ENCODE measurements at regions of chr15 and their contacts with region 1.

Region 1: DNA sequence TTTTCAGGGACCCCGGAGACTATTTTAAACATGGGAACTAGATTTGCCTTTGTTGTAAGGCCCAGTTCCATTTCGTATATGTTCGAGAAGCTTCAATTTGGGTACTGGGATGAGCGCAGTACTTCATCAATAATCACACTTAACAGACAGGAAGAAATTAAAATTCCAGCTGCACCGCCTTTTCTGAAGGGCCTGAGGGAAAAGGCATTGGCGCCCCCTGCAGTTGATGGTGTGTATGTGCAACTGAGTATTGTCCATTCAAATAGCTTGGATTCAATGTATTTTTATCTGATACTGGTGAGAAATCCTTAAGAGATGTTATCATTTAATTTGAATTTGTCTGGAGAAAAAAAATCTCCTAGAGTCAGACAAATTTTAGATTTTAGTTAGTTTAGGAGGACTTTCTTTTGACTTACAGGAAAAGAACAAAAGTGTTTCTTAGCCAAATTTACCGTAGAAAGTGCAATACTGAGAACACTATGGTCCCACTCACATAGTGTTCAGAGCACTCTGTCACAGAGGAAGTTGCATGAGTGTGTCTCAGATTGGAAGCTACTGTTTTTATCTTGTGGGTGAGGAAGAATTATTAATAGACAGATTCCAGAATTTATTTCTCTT is 5.4 kb upstream of the ALDH1A2 start:
- DNase-seq: peak; percentile 7 to 74 (median 58)
- H3K4me3 ChIP-seq: no peak overlapping the region
- H3K27ac ChIP-seq: no peak overlapping the region
- H3K27me3 ChIP-seq: peaks cover 0 to 23% (median 10%) of the 10 kb centered on the region in 45 donors
- CTCF ChIP-seq: peak; percentile 82 to 98 (median 92)

Region 2: DNA sequence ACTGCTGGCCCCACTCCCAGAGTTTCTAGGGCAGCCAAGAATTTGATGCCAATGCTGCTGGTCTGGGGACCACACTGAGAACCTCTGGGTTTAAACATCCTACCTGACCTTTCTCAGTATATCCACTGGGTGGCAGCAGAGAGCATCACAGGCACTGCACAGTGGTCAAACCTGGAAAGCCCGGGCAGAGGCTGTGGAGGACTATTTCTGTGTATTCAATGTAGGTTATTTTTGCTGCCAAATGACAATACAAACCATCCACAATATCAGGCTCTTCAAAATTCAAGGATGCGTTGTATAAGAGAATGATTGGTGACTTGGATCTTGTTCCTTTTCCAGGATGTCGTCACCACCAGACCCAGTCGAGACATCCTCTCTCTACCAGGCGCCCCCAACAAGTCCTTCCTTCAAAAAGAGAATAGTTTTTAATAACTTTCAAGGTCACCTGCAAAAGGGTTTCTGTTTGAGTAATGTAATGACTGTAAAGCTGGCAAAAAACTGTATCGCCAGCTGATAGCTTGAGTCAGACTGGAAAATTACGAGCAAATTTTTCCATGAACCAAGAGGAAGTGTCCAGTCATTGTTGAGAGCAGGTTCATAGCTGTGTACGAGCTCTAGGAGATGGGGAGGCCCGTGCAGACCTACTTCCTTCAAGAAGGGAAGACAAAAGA is 509.7 kb before region 1 on chr15:
- intact Hi-C with region 1: loop called (anchors 5 to 10 kb)
- DNase-seq: peak in 9 of 10 donors; percentile 30 to 79 (median 61)
- H3K4me3 ChIP-seq: peak overlapping the region in 2 of 59 donors; percentile 6 to 12
- H3K27ac ChIP-seq: peak overlapping the region in 3 of 59 donors; percentile 25 to 32 (median 29)
- H3K27me3 ChIP-seq: no peaks in the 10 kb centered on the region
- CTCF ChIP-seq: peak; percentile 80 to 97 (median 92)

Region 3: GRCh38 chr15:57751177-57751800 is 319.6 kb before region 1 on chr15:
- intact Hi-C with region 1: loop called in 1 of 2 experiments (anchors 5 kb)
- DNase-seq: peak in 1 of 10 donors; percentile 27
- H3K4me3 ChIP-seq: no peak overlapping the region
- H3K27ac ChIP-seq: peak overlapping the region in 19 of 59 donors; percentile 3 to 67 (median 30)
- H3K27me3 ChIP-seq: no peaks in the 10 kb centered on the region
- CTCF ChIP-seq: peak in 55 of 56 donors; percentile 35 to 85 (median 69)

Region 4: DNA sequence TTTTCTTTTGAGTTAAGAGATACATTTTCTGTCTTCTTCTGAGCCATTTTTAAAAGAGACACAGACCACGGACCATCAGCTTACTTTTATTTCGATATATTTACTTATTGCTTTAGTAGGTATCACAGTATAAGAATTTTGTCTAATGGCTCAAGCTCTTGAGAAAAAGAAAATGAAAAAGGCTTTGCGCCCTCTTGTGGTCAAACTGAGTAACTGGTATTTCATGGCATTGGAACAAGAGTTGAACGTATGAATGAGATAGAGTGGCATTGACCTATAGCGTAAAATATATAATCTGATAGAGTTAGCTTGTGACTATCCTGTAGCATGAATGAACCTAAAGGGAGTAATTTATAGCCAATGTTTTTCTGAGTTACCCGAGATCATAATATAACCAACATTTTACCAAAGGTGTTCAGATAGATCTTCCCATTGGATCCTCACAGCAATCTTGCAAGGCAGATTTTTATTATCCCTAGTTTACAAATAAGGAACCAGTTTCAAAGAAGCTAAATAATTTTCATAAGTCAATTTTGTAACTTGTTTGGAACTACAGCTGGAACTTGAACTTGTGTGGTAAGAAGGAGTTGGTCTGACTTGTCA is 209.8 kb before region 1 on chr15:
- intact Hi-C with region 1: loop called (anchors 5 to 10 kb)
- DNase-seq: peak in 1 of 10 donors; percentile 18
- H3K4me3 ChIP-seq: no peak overlapping the region
- H3K27ac ChIP-seq: no peak overlapping the region
- H3K27me3 ChIP-seq: peaks cover 0 to 3% (median 0%) of the 10 kb centered on the region in 45 donors
- CTCF ChIP-seq: peak; percentile 82 to 98 (median 92)

Region 5: GRCh38 chr15:57866149-57866736 is 204.7 kb before region 1 on chr15:
- intact Hi-C with region 1: loop called (anchors 5 to 10 kb)
- DNase-seq: no peak
- H3K4me3 ChIP-seq: no peak overlapping the region
- H3K27ac ChIP-seq: no peak overlapping the region
- H3K27me3 ChIP-seq: peaks cover 0 to 26% (median 0%) of the 10 kb centered on the region in 45 donors
- CTCF ChIP-seq: peak in 44 of 56 donors; percentile 19 to 72 (median 42)

Region 6: GRCh38 chr15:57994221-57995049 is 76.5 kb before region 1 on chr15:
- intact Hi-C with region 1: no loop called
- DNase-seq: no peak
- H3K4me3 ChIP-seq: no peak overlapping the region
- H3K27ac ChIP-seq: no peak overlapping the region
- H3K27me3 ChIP-seq: peaks cover 0 to 4% (median 0%) of the 10 kb centered on the region in 45 donors
- CTCF ChIP-seq: no peak

Region 7: GRCh38 chr15:58182460-58183163 is 111.7 kb after region 1 on chr15:
- intact Hi-C with region 1: loop called (anchors 5 to 10 kb)
- DNase-seq: peak in 7 of 10 donors; percentile 7 to 69 (median 38)
- H3K4me3 ChIP-seq: no peak overlapping the region
- H3K27ac ChIP-seq: no peak overlapping the region
- H3K27me3 ChIP-seq: peaks cover 0 to 2% (median 0%) of the 10 kb centered on the region in 45 donors
- CTCF ChIP-seq: peak; percentile 14 to 94 (median 79)

Measured in dorsolateral prefrontal cortex (tissue), 120 donors.